PC-3 (cell line): ENCODE measurements at regions of chr11 and their contacts with region 1.

Region 1: GRCh38 chr11:66694732-66695207 is 17.1 kb upstream of the RBM4B start:
- DNase-seq: peak; percentile 99
- ATAC-seq: peak; percentile 99
- H3K4me3 ChIP-seq: no peak overlapping the region
- H3K27ac ChIP-seq: no peak overlapping the region
- H3K4me1 ChIP-seq: no peaks in the 10 kb centered on the region
- H3K27me3 ChIP-seq: no peaks in the 10 kb centered on the region
- CTCF ChIP-seq: peak; percentile 99

Region 2: GRCh38 chr11:66638177-66639065 is 56.3 kb before region 1 on chr11 and contains the start of gene RBM4:
- CTCF ChIA-PET with region 1: no interaction called
- POLR2A ChIA-PET with region 1: no interaction called
- intact Hi-C with region 1: no loop called
- DNase-seq: peak; percentile 100
- ATAC-seq: peak; percentile 93
- H3K4me3 ChIP-seq: peak within 1 kb of the TSS; percentile 95
- H3K27ac ChIP-seq: peak within 1 kb of the TSS; percentile 73
- H3K4me1 ChIP-seq: peaks cover 43% of the 10 kb centered on the region
- H3K27me3 ChIP-seq: no peaks in the 10 kb centered on the region
- CTCF ChIP-seq: no peak; the same call in 1 of the 2 replicates
- total RNA-seq, gene RBM4: 152 and 164 TPM in 2 replicates

Region 3: DNA sequence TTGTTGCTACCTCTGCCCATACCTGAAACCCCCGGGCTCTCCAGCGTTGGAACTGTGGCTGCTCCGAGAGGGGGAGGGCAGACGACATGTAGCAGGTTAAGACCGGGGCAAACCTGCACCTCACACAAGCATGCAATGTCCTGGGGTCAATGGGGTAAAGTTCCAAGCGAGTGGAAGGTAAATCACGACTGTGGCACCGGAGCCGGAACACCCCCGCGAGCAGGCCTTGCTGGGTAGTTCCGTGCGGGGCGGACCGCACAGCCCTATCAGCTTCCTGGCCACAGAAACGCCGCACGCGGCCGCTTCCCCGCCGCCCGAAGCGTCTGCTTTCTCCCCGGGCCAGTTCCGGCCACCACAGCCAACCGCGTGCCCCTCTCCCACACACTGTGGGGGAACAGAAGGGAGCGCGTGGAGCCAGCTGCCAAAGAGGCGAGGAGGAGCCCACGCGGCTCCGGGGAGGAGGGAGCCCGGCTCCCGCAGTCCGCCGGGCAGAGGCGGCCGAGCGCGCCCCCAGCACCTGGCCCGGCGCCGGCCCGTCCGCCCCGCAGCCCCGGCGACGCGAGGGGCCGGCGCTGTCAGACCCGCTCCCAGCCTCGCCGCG is 32.6 kb after region 1 on chr11:
- CTCF ChIA-PET with region 1: no interaction called
- POLR2A ChIA-PET with region 1: no interaction called
- intact Hi-C with region 1: loop called (anchors 2 kb)
- DNase-seq: peak; percentile 50
- ATAC-seq: peak; percentile 33
- H3K4me3 ChIP-seq: peak overlapping the region; percentile 77
- H3K27ac ChIP-seq: peak overlapping the region; percentile 27
- H3K4me1 ChIP-seq: peaks cover 44% of the 10 kb centered on the region
- H3K27me3 ChIP-seq: no peaks in the 10 kb centered on the region
- CTCF ChIP-seq: no peak

Region 4: DNA sequence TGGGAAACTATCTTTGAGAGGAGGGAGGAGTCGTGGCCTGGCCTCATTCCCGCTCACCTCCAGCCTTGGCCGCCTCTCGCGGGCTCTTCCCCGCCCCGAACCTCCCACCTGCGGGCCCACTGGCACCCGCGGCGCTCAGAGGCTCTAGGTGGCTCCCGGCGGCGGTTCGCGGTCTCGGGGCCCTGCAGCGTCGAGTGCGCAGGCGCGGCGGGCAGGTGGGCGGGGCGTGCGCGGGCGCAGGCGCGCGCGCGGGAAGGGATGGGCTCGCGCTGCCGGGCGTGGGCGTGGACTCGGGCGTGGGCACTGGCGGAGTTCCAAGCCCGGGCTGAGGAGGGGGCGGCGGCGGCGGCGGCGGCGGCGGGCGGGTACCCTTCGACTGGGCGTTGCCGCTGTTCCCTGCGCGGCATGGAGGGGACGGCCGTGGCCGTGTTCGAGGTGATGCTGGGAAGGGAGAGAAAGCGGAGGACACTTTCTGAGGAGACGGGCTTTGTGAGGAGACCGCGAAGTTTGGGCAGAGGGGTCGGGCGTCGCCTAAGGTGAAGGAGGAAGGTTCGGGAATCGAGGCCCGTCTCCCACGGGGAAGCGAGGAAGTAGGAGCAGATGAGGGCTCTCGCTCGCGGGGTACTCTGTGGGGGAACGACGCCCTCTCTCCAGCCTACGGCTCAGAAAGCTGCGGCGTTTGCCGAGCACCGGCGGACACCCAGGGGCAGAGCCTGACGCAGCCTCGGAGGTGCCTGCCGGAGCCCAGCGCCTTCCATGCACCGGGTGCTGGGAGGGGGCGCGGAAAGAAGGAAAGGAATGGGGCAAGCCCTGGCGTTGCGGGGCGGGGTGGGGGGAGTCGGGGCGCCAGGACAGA is 49.9 kb after region 1 on chr11:
- CTCF ChIA-PET with region 1: no interaction called
- POLR2A ChIA-PET with region 1: no interaction called
- intact Hi-C with region 1: loop called (anchors 2 kb)
- DNase-seq: peak; percentile 94
- ATAC-seq: peak; percentile 58
- H3K4me3 ChIP-seq: peak overlapping the region; percentile 77
- H3K27ac ChIP-seq: peak overlapping the region; percentile 86
- H3K4me1 ChIP-seq: peaks cover 50% of the 10 kb centered on the region
- H3K27me3 ChIP-seq: no peaks in the 10 kb centered on the region
- CTCF ChIP-seq: no peak

Region 5: DNA sequence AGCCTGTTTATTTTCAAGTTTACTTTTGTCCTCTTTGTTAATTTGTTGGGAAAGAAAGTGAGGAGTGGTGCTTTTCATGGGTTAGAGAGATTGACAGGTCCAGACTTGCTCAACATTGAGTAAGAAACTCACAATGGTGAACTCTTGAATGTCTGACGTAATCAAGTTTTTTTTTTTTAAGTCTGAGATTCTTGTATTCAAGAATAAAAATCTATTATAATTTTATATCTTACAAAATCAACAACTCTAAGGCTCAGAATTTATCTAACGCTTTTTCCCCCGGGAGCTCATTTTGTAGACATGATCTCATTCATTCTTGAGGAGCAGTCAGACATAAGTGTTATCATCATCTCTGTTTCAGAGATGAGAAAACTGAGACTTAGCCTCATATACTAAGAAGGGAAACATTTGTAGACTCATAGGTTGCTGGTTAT is 73.3 kb after region 1 on chr11:
- CTCF ChIA-PET with region 1: interaction called, 10 read pairs
- POLR2A ChIA-PET with region 1: no interaction called
- intact Hi-C with region 1: no loop called
- DNase-seq: no peak
- ATAC-seq: no peak
- H3K4me3 ChIP-seq: no peak overlapping the region
- H3K27ac ChIP-seq: no peak overlapping the region
- H3K4me1 ChIP-seq: no peaks in the 10 kb centered on the region
- H3K27me3 ChIP-seq: no peaks in the 10 kb centered on the region
- CTCF ChIP-seq: no peak

Region 6: GRCh38 chr11:66787912-66788758 is 93.4 kb after region 1 on chr11:
- CTCF ChIA-PET with region 1: no interaction called
- POLR2A ChIA-PET with region 1: no interaction called
- intact Hi-C with region 1: loop called (anchors 1 kb)
- DNase-seq: peak; percentile 14
- ATAC-seq: no peak
- H3K4me3 ChIP-seq: no peak overlapping the region
- H3K27ac ChIP-seq: peak overlapping the region; percentile 74
- H3K4me1 ChIP-seq: peaks cover 38% of the 10 kb centered on the region
- H3K27me3 ChIP-seq: no peaks in the 10 kb centered on the region
- CTCF ChIP-seq: no peak

Region 7: GRCh38 chr11:66815646-66816045 is 120.9 kb after region 1 on chr11:
- CTCF ChIA-PET with region 1: no interaction called
- POLR2A ChIA-PET with region 1: no interaction called
- intact Hi-C with region 1: loop called (anchors 1 kb)
- DNase-seq: peak; percentile 93
- ATAC-seq: peak; percentile 91
- H3K4me3 ChIP-seq: peak overlapping the region; percentile 40; the same call in 1 of the 2 replicates
- H3K27ac ChIP-seq: peak overlapping the region; percentile 87
- H3K4me1 ChIP-seq: peaks cover 35% of the 10 kb centered on the region
- H3K27me3 ChIP-seq: no peaks in the 10 kb centered on the region
- CTCF ChIP-seq: no peak

Region 8: DNA sequence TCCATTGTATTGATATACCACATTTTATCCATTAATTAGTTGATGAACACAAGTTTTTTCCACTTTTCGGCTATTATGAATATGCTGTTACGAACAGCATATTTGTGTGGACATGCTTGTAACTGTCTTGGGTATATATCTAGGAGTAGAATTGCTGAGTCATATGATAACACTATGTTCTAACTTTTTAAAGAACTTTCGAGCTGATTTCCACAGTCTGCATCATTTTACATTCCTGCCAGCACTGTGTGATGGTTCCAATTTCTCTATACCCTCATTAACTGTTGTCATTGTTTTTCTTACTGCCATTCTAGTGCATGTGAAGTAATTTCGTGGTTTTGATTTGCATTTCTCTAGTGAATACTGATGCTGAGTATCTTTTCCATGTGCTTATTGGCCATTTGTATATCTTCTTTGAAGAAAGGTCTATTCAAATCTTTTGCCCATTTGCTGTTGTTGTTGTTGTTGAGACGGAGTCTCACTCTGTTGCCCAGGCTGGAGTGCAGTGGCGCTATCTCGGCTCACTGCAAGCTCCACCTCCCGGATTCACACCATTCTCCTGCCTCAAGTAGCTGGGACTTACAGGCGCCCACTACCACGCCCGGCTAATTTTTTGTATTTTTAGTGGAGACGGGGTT is 141.1 kb after region 1 on chr11:
- CTCF ChIA-PET with region 1: interaction called, 4 read pairs
- POLR2A ChIA-PET with region 1: no interaction called
- intact Hi-C with region 1: loop called (anchors 1 kb)
- DNase-seq: no peak
- ATAC-seq: no peak
- H3K4me3 ChIP-seq: no peak overlapping the region
- H3K27ac ChIP-seq: no peak overlapping the region
- H3K4me1 ChIP-seq: peaks cover 10% of the 10 kb centered on the region
- H3K27me3 ChIP-seq: no peaks in the 10 kb centered on the region
- CTCF ChIP-seq: no peak

Region 9: GRCh38 chr11:66855574-66856495 is 161.1 kb after region 1 on chr11:
- CTCF ChIA-PET with region 1: no interaction called
- POLR2A ChIA-PET with region 1: no interaction called
- intact Hi-C with region 1: no loop called
- DNase-seq: peak; percentile 99
- ATAC-seq: peak; percentile 76
- H3K4me3 ChIP-seq: peak overlapping the region; percentile 95
- H3K27ac ChIP-seq: peak overlapping the region; percentile 70
- H3K4me1 ChIP-seq: peaks cover 17% of the 10 kb centered on the region
- H3K27me3 ChIP-seq: no peaks in the 10 kb centered on the region
- CTCF ChIP-seq: no peak

Region 10: GRCh38 chr11:67698247-67698646 is 1003.5 kb after region 1 on chr11:
- CTCF ChIA-PET with region 1: no interaction called
- POLR2A ChIA-PET with region 1: no interaction called
- intact Hi-C with region 1: no loop called
- DNase-seq: no peak
- ATAC-seq: no peak
- H3K4me3 ChIP-seq: no peak overlapping the region
- H3K27ac ChIP-seq: no peak overlapping the region
- H3K4me1 ChIP-seq: peaks cover 30% of the 10 kb centered on the region
- H3K27me3 ChIP-seq: no peaks in the 10 kb centered on the region
- CTCF ChIP-seq: peak; percentile 36